A673 (cell line): ENCODE measurements at regions of chr15 and their contacts with region 1.

Region 1: GRCh38 chr15:89750560-89751542 is at the start of gene MESP1:
- DNase-seq: peak; percentile 93
- H3K4me3 ChIP-seq: peak within 1 kb of the TSS; percentile 69
- H3K27ac ChIP-seq: peak within 1 kb of the TSS; percentile 76
- H3K4me1 ChIP-seq: peaks cover 10% of the 10 kb centered on the region
- H3K27me3 ChIP-seq: no peaks in the 10 kb centered on the region
- CTCF ChIP-seq: peak; percentile 63
- total RNA-seq, gene MESP1: 5.2 and 6.5 TPM in 2 replicates

Region 2: DNA sequence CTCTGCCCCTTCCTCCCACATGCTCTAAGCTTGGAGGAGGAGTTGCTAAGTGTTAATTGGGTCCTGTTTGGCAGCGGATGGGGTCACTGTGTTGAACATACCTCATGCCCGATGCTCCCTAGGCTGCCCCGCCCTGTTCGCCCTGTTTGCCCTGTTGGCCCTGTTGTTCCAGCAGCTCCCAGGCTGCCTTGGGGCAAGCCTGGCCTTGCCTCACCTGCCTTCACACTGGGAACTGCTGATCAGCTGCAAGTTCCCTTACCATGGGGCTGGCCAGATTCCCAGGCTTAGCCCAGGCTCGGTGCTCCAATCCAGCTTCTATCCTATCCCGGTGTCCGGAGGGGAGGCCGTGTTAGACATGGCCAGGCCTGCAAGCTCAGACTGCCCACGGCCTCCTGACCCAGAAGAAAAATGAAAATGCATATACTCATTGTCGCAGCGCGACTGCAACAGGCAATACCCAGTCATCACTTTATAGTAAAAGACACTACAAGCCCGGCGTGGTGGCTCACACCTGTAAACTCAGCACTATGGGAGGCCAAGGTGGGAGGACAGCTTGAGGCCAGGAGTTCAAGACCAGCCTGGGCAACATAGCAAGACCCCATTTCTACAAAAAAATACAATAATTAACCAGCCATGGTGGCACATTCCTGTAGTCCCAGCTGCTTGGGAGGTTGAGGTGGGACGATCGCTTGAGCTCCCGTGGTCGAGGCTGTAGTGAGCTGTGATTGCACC is 207.4 kb after region 1 on chr15:
- CTCF ChIA-PET with region 1: no interaction called
- POLR2A ChIA-PET with region 1: no interaction called
- intact Hi-C with region 1: loop called (anchors 10 kb)
- DNase-seq: no peak
- H3K4me3 ChIP-seq: no peak overlapping the region
- H3K27ac ChIP-seq: no peak overlapping the region
- H3K4me1 ChIP-seq: no peaks in the 10 kb centered on the region
- H3K27me3 ChIP-seq: no peaks in the 10 kb centered on the region
- CTCF ChIP-seq: no peak